ENCODE measurements at regions of chr16 and their contacts with region 1.

Region 1: GRCh38 chr16:67447508-67448076 is 16.7 kb downstream of the HSD11B2 start:
- DNase-seq: peak; percentile 87
- H3K4me3 Mint-ChIP-seq: no peak overlapping the region
- H3K27ac Mint-ChIP-seq: no peak overlapping the region
- H3K4me1 Mint-ChIP-seq: no peaks in the 10 kb centered on the region
- H3K27me3 Mint-ChIP-seq: no peaks in the 10 kb centered on the region

Region 2: GRCh38 chr16:67464565-67464964 is 17.0 kb after region 1 on chr16:
- CTCF ChIA-PET with region 1: interaction called, 51 read pairs
- POLR2A ChIA-PET with region 1: no interaction called
- intact Hi-C with region 1: no loop called
- DNase-seq: no peak
- H3K4me3 Mint-ChIP-seq: no peak overlapping the region
- H3K27ac Mint-ChIP-seq: no peak overlapping the region
- H3K4me1 Mint-ChIP-seq: peaks cover 10% of the 10 kb centered on the region
- H3K27me3 Mint-ChIP-seq: no peaks in the 10 kb centered on the region

Measured in activated CD4-positive, alpha-beta memory T cell treated with anti-CD3 and anti-CD28 coated beads for 36 hours (primary cell).